ENCODE measurements at regions of chr18 and their contacts with region 1.

Region 1: DNA sequence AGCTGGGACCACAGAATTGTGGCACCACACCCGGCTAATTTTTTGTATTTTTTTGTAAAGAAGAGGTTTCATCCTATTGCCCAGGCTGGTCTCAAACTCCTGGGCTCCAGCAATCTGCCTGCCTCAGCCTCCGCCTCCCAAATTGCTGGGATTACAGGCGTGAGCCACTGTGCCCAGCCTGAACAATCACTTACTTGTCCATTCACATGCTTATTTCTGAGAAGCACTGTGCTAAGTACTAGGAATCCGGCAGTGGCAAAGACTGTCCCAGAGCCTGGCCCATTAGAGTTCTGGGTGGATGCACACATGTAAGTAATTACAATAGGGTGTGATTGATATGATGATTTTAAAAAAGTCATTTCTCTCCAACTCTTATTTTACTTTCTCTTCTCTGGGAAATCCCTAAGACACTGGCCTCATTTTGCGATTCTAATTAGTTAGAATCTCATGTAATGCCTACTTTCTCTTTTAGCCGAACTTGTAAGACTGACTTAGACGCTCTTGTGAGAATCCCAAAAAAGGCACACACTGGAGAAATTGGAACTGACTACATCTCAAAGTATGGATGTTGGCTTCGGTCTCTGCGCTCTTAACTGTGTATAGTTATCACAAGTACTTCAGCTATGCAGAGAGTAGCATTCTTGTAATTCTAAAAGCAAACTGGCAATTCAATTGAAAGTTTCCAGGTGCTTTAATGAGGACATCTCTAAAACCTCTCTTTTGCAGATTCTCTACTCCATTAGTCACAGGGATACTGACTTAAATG is 567.7 kb downstream of the DCC start:
- DNase-seq: no peak
- H3K4me3 ChIP-seq: peak overlapping the region in 3 of 4 donors; percentile 6 to 43 (median 18)
- H3K27ac ChIP-seq: no peak overlapping the region
- H3K4me1 ChIP-seq: peaks cover 0 to 5% (median 0%) of the 10 kb centered on the region in 4 donors
- H3K27me3 ChIP-seq: no peaks in the 10 kb centered on the region
- CTCF ChIP-seq: no peak
- EP300 ChIP-seq: no peak
- POLR2A ChIP-seq: no peak

Region 2: DNA sequence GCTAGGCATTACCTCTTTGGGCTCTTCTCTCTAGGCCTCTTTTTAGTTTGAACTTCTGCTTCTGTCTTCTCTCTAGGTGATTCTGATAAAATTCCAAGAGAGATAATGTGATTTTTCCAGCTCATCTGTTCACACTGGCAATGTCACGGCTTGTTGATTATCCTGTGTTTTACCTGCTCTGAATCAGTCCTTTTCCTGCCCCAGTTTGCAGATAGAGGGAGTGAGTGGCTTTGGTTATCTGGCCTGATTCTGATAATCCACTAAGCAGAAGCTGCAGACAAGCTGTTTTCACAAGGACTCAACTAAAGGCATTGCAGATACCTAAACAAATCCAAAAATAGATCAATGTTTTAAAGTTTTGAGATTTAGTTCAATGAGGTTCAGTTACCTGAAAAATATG is 455.9 kb before region 1 on chr18:
- intact Hi-C with region 1: no loop called
- DNase-seq: no peak
- H3K4me3 ChIP-seq: no peak overlapping the region
- H3K27ac ChIP-seq: no peak overlapping the region
- H3K4me1 ChIP-seq: no peaks in the 10 kb centered on the region
- H3K27me3 ChIP-seq: no peaks in the 10 kb centered on the region
- CTCF ChIP-seq: no peak
- EP300 ChIP-seq: no peak
- POLR2A ChIP-seq: no peak

Region 3: DNA sequence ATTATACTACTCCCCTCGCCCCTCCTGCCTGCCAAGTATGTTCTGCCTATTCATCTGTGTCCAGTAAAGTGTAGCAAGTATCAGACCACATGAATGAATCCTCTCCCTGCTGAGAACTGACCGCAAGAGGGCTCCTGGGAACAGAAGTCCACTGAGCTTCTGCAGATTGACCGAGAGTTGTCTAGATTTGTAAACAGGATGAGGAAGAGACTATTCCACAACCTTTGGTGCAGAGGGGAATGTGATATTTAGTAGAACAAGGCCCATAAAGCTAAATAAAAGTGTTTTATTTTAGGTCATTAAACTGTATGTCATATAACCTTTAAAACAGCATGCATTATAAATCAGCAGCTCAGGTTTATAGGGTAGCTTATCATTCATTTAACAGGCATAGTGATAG is 190.8 kb before region 1 on chr18:
- intact Hi-C with region 1: loop called (anchors 5 kb)
- DNase-seq: no peak
- H3K4me3 ChIP-seq: no peak overlapping the region
- H3K27ac ChIP-seq: no peak overlapping the region
- H3K4me1 ChIP-seq: no peaks in the 10 kb centered on the region
- H3K27me3 ChIP-seq: no peaks in the 10 kb centered on the region
- CTCF ChIP-seq: peak in 2 of 3 experiments; percentile 13 to 39
- EP300 ChIP-seq: no peak
- POLR2A ChIP-seq: no peak

Region 4: DNA sequence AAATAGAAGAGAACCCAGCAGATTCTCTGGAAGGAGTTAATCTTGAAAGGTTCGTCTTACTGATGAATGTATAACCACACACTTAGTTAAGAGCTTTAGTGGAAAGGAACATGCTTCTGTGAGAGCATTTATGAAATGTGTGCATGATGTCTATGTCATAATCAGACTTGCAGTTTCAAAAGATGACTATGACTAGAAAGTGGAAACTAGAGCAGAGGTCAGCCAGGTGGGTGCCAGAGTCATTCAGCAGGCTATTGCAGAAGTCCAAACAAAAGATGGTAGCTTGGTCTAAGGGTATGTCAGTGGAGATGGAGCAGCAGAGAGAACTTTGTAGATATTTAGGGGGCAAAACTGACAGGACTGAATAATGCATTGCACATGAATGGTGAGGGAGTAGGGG is 258.0 kb after region 1 on chr18:
- intact Hi-C with region 1: no loop called
- DNase-seq: no peak
- H3K4me3 ChIP-seq: no peak overlapping the region
- H3K27ac ChIP-seq: no peak overlapping the region
- H3K4me1 ChIP-seq: no peaks in the 10 kb centered on the region
- H3K27me3 ChIP-seq: no peaks in the 10 kb centered on the region
- CTCF ChIP-seq: no peak
- EP300 ChIP-seq: no peak
- POLR2A ChIP-seq: no peak